Activated CD4-positive, alpha-beta memory T cell treated with anti-CD3 and anti-CD28 coated beads for 36 hours (primary cell): ENCODE measurements at regions of chr15 and their contacts with region 1.

Region 1: GRCh38 chr15:49046220-49047102 is at the start of gene SECISBP2L:
- DNase-seq: peak; percentile 96
- H3K4me3 Mint-ChIP-seq: peak within 1 kb of the TSS; percentile 91
- H3K27ac Mint-ChIP-seq: peak within 1 kb of the TSS; percentile 76
- H3K4me1 Mint-ChIP-seq: peaks cover 28% of the 10 kb centered on the region
- H3K27me3 Mint-ChIP-seq: no peaks in the 10 kb centered on the region
- total RNA-seq, gene SECISBP2L: 22.5 to 24.6 TPM

Region 2: GRCh38 chr15:48810414-48811317 is 235.8 kb before region 1 on chr15 and contains the start of gene CEP152:
- CTCF ChIA-PET with region 1: no interaction called
- POLR2A ChIA-PET with region 1: no interaction called
- intact Hi-C with region 1: loop called (anchors 1 kb)
- DNase-seq: peak; percentile 99
- H3K4me3 Mint-ChIP-seq: peak within 1 kb of the TSS; percentile 96
- H3K27ac Mint-ChIP-seq: peak within 1 kb of the TSS; percentile 95
- H3K4me1 Mint-ChIP-seq: peaks cover 36% of the 10 kb centered on the region
- H3K27me3 Mint-ChIP-seq: peaks cover 1% of the 10 kb centered on the region
- total RNA-seq, gene CEP152: 36.1 to 39.4 TPM

Region 3: DNA sequence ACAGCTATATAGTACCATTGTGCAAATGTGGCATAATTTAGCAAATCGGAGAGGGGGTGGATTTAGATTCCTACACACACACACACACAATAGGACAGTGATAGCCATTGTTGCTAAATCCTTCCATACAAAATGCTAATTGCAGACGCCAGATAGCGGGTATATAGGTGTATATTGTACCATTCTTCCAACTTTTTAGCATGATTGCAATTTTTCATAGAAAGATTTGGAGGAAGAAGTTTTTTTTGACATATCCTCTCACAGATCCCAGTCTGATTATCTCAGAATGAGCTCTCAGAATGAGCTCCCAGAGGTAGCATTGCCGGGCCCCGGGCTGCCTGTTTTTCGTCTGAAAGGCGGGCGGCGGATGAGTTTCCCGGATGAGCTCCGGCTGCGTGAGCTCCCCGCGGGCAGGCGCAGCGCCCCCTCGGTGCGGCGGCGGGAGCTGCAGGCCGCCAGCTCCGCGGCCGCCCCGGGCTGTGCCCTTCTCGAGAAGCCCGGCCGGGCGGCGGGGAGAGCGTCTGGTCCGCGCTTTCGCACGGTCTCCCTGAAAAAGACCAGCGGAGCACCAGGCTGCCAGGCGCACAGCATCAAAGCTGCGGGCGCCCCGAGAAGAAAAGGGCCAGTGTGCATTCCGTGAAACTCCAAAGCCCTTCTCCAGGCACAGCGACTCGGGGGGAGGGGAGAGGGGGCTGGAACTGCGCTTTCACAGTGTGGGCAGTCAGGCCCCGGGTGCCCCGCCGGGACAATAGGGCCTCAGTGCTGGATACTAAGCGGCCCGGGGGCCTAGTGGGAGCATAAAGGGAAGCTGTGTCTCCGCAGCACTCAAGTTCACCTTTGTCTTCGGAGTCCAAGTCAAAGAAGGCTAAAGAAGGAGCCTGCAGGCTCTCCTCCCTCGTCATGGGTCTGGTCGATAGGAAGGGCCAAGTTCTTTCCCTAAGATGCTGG is 70.7 kb before region 1 on chr15:
- CTCF ChIA-PET with region 1: interaction called, 13 read pairs
- POLR2A ChIA-PET with region 1: no interaction called
- intact Hi-C with region 1: no loop called
- DNase-seq: peak; percentile 83
- H3K4me3 Mint-ChIP-seq: peak overlapping the region; percentile 39
- H3K27ac Mint-ChIP-seq: no peak overlapping the region
- H3K4me1 Mint-ChIP-seq: no peaks in the 10 kb centered on the region
- H3K27me3 Mint-ChIP-seq: peaks cover 19% of the 10 kb centered on the region

Region 4: DNA sequence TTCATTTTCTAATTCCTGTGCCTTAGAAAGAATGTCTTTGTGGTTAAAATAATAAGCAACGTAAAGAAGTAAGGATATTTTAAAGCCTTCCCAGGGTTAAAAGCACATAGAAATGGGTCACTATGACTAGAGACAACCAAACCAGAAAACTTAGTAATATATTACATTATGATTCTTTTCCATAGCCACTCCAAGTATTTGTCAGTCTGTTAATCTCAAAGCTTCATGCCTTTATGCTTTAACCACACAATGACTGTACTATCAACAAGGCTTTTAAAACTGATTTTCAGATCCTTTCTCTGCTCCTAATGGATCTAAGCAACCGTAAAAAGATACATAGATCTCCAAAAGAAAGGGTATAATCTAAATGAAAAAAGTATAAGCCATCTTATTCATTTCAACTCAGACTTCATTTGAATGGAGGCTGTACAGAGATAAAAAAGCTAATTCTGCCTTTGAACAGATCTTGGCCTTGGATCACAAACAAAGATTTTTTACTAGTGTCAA is 14.6 kb before region 1 on chr15:
- CTCF ChIA-PET with region 1: no interaction called
- POLR2A ChIA-PET with region 1: no interaction called
- intact Hi-C with region 1: no loop called
- DNase-seq: no peak
- H3K4me3 Mint-ChIP-seq: no peak overlapping the region
- H3K27ac Mint-ChIP-seq: no peak overlapping the region
- H3K4me1 Mint-ChIP-seq: peaks cover 1% of the 10 kb centered on the region
- H3K27me3 Mint-ChIP-seq: no peaks in the 10 kb centered on the region

Region 5: GRCh38 chr15:49075885-49076284 is 29.4 kb after region 1 on chr15:
- CTCF ChIA-PET with region 1: no interaction called
- POLR2A ChIA-PET with region 1: no interaction called
- intact Hi-C with region 1: no loop called
- DNase-seq: no peak
- H3K4me3 Mint-ChIP-seq: no peak overlapping the region
- H3K27ac Mint-ChIP-seq: no peak overlapping the region
- H3K4me1 Mint-ChIP-seq: no peaks in the 10 kb centered on the region
- H3K27me3 Mint-ChIP-seq: no peaks in the 10 kb centered on the region

Region 6: DNA sequence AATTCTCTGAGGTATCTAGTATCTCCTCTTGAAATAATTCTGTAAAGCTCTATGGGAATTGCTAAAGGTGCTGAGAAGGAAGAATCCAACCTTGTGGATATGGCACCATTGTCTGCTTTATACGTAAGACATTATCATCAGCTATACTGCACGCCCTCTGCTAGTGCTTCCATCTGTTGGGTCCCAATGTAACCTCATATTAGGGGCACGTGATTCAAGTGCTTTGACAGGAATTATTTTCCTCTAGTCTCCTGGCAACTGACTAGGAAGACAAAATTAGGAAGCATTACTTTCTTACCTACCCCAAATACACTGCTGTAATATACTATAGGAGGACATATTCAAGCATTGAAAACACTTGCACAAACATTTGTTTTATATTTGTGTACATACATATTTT is 84.9 kb after region 1 on chr15:
- CTCF ChIA-PET with region 1: no interaction called
- POLR2A ChIA-PET with region 1: no interaction called
- intact Hi-C with region 1: no loop called
- DNase-seq: no peak
- H3K4me3 Mint-ChIP-seq: no peak overlapping the region
- H3K27ac Mint-ChIP-seq: no peak overlapping the region
- H3K4me1 Mint-ChIP-seq: peaks cover 15% of the 10 kb centered on the region
- H3K27me3 Mint-ChIP-seq: no peaks in the 10 kb centered on the region

Region 7: DNA sequence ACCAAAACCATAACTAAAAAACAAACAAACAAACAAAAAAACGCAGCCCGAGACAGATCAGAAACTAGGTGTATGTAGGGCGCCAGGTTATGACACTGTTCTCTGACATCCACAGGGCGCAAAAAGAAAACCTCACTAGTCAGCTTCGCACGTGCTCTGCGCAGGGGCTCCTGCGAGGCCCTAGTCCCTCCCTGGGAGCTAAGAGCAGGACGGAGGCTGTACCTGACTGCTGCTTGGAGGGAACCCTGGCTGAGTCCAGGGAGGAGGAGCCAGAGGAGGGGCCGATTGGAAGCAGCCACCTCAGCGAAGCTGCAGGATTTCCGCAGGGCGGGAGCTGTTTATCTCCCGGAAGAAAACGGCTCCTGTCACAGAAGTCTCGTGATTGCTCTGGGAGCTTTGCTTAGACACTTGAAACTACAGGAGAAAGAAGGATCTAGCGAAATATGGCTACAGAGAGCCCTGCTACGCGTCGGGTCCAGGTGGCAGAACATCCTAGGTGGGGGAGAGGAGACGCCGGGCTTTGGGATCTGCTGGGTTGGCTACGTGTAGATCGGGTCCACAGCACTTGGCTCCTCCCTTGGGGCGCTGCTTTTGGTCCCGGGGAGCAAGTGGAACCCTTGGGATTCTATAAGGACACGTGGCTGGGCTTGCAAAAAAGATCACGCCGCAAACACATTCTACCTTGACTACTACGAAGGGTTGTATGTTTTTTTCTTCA is 123.6 kb after region 1 on chr15 and contains the start of gene GALK2:
- CTCF ChIA-PET with region 1: no interaction called
- POLR2A ChIA-PET with region 1: no interaction called
- intact Hi-C with region 1: loop called (anchors 2 kb)
- DNase-seq: peak; percentile 92
- H3K4me3 Mint-ChIP-seq: peak within 1 kb of the TSS; percentile 87
- H3K27ac Mint-ChIP-seq: peak within 1 kb of the TSS; percentile 88
- H3K4me1 Mint-ChIP-seq: peaks cover 30% of the 10 kb centered on the region
- H3K27me3 Mint-ChIP-seq: no peaks in the 10 kb centered on the region
- total RNA-seq, gene GALK2: 31.1 to 33.1 TPM

Region 8: GRCh38 chr15:49620658-49621368 is 574.4 kb after region 1 on chr15 and contains the starts of genes DTWD1 and FAM227B:
- CTCF ChIA-PET with region 1: no interaction called
- POLR2A ChIA-PET with region 1: no interaction called
- intact Hi-C with region 1: loop called (anchors 10 kb)
- DNase-seq: peak; percentile 96
- H3K4me3 Mint-ChIP-seq: peak within 1 kb of the TSS; percentile 94
- H3K27ac Mint-ChIP-seq: peak within 1 kb of the TSS; percentile 92
- H3K4me1 Mint-ChIP-seq: peaks cover 32% of the 10 kb centered on the region
- H3K27me3 Mint-ChIP-seq: no peaks in the 10 kb centered on the region
- total RNA-seq, gene DTWD1: 14.3 to 18.5 TPM
- total RNA-seq, gene FAM227B: 2.8 to 3.8 TPM